ENCODE measurements at regions of chr11 and their contacts with region 1.

Region 1: GRCh38 chr11:64240394-64241174 is at the start of gene FKBP2:
- DNase-seq: peak; percentile 97 to 99 (median 99)
- H3K4me3 ChIP-seq: peak within 1 kb of the TSS; percentile 76
- H3K4me3 Mint-ChIP-seq: peak within 1 kb of the TSS; percentile 87 to 97 (median 90)
- H3K27ac ChIP-seq: peak within 1 kb of the TSS; percentile 99
- H3K27ac Mint-ChIP-seq: peak within 1 kb of the TSS; percentile 99 to 100 (median 100)
- H3K4me1 ChIP-seq: peaks cover 36% of the 10 kb centered on the region
- H3K4me1 Mint-ChIP-seq: peaks cover 18 to 62% (median 23%) of the 10 kb centered on the region in 3 donors
- H3K27me3 ChIP-seq: no peaks in the 10 kb centered on the region
- H3K27me3 Mint-ChIP-seq: no peaks in the 10 kb centered on the region
- total RNA-seq, gene FKBP2: 27.9 to 28.4 TPM

Region 2: DNA sequence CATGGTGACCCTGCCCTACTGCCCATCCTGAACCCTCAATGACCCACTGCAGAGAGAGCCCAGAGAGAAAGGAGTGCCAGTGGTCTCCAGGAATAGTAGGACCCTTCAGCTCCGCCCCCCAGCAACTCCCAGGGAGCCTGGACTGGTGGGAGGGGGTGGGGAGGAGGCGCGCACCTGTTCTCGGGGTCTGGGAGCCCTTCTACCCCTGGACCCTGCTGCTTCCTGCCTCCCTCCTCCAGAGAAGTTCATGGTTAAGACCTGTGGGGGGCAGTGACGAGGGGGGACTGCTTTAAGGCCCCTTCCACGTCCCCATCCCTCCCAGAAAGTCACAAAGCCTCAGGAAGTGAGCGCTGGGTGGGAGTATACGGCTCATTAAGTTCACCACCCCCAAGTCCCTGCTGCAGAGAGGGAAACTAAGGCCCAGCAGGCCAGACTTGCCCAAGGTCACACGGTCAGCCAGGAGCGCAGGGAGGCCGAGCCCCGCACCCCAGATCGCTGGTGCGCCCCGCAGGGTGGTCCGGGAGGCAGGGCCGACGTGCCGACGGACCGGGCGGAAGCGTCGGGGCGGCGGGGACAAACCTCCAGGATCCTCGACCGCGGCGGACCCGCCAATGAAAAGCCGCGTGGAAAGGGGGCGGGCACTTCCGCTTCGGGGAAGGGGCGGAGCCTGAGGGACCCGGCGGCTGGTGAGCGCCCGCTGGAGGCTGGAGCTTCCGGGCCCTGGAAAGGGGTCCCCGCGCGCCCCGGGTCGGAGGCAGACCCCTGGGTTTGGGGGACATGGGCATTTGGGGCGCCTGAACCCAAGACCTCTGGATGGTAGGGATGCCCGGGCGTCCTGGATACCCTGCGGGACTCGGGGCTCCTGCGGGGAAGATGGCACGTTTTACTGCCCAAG is 14.7 kb before region 1 on chr11 and contains the starts of genes NUDT22 and TRPT1:
- CTCF ChIA-PET with region 1: interaction called, 9 read pairs
- POLR2A ChIA-PET with region 1: interaction called, 13 read pairs
- DNase-seq: peak; percentile 86 to 93 (median 88)
- H3K4me3 ChIP-seq: peak within 1 kb of the TSS; percentile 90
- H3K4me3 Mint-ChIP-seq: peak within 1 kb of the TSS; percentile 90 to 94 (median 92)
- H3K27ac ChIP-seq: peak within 1 kb of the TSS; percentile 88
- H3K27ac Mint-ChIP-seq: peak within 1 kb of the TSS; percentile 89 to 96 (median 93)
- H3K4me1 ChIP-seq: peaks cover 35% of the 10 kb centered on the region
- H3K4me1 Mint-ChIP-seq: peaks cover 30 to 51% (median 31%) of the 10 kb centered on the region in 3 donors
- H3K27me3 ChIP-seq: no peaks in the 10 kb centered on the region
- H3K27me3 Mint-ChIP-seq: no peaks in the 10 kb centered on the region
- total RNA-seq, gene NUDT22: 75.3 to 78.6 TPM
- total RNA-seq, gene TRPT1: 28.3 to 31.5 TPM